ENCODE measurements at regions of chr2 and their contacts with region 1.

Region 1: GRCh38 chr2:174748948-174749347 is 15.3 kb downstream of the CHRNA1 start:
- DNase-seq: peak; percentile 83
- H3K4me3 Mint-ChIP-seq: no peak overlapping the region
- H3K27ac Mint-ChIP-seq: no peak overlapping the region
- H3K4me1 Mint-ChIP-seq: peaks cover 39% of the 10 kb centered on the region
- H3K27me3 Mint-ChIP-seq: peaks cover 41% of the 10 kb centered on the region

Region 2: GRCh38 chr2:174561283-174561971 is 187.5 kb before region 1 on chr2:
- CTCF ChIA-PET with region 1: no interaction called
- DNase-seq: no peak
- H3K4me3 Mint-ChIP-seq: no peak overlapping the region
- H3K27ac Mint-ChIP-seq: no peak overlapping the region
- H3K4me1 Mint-ChIP-seq: peaks cover 4% of the 10 kb centered on the region
- H3K27me3 Mint-ChIP-seq: no peaks in the 10 kb centered on the region

Region 3: GRCh38 chr2:174590928-174591648 is 157.9 kb before region 1 on chr2:
- CTCF ChIA-PET with region 1: no interaction called
- DNase-seq: no peak
- H3K4me3 Mint-ChIP-seq: peak overlapping the region; percentile 24
- H3K27ac Mint-ChIP-seq: peak overlapping the region; percentile 80
- H3K4me1 Mint-ChIP-seq: peaks cover 65% of the 10 kb centered on the region
- H3K27me3 Mint-ChIP-seq: no peaks in the 10 kb centered on the region

Region 4: GRCh38 chr2:174738841-174739240 is 10.1 kb before region 1 on chr2:
- CTCF ChIA-PET with region 1: interaction called, 11 read pairs
- DNase-seq: no peak
- H3K4me3 Mint-ChIP-seq: no peak overlapping the region
- H3K27ac Mint-ChIP-seq: no peak overlapping the region
- H3K4me1 Mint-ChIP-seq: no peaks in the 10 kb centered on the region
- H3K27me3 Mint-ChIP-seq: peaks cover 43% of the 10 kb centered on the region

Region 5: GRCh38 chr2:174771631-174772471 is 22.9 kb after region 1 on chr2:
- CTCF ChIA-PET with region 1: interaction called, 38 read pairs
- DNase-seq: peak; percentile 65
- H3K4me3 Mint-ChIP-seq: no peak overlapping the region
- H3K27ac Mint-ChIP-seq: no peak overlapping the region
- H3K4me1 Mint-ChIP-seq: peaks cover 25% of the 10 kb centered on the region
- H3K27me3 Mint-ChIP-seq: peaks cover 41% of the 10 kb centered on the region

Region 6: DNA sequence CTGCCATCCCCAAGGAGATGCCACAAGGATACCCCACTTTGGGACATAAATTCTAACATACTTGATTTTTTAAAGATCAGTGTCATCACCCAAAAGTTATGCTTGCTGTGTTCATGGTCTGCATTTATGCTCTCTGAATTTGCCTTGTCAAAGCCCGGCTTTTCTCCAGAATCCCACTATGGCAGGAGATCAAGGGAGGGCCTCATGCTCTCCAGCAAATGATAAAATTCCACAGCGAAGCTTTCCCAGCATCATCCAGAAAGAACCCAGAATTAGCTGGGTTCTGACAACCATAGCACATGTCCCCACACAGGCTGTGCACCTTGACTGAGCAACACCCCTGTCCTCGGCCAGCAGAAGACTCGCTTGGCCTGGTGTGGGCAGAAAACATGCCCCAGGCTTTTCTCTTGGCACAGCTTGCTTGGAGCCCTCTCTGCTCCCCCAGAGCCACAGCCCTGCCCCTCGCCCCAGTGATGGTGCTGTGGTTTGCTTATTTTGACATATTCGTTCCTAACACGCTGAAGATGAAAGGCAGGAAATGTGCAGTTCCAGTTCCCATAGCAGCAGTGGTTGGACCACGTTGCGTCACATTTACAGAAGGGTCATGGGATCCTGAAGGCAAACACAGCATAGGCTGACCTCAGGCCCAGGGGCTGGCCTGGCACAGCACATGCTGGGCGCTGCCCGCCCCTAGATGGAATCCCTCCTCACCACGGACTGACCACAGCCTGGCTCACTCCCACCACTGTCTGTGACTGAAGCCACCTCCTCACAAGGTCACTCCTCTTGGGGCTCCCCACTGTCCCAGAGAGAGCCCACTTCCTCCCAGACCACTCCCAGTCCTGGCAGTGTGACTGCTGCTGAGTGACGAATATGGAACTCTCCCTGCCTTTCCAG is 29.4 kb after region 1 on chr2:
- CTCF ChIA-PET with region 1: interaction called, 38 read pairs
- DNase-seq: peak; percentile 91
- H3K4me3 Mint-ChIP-seq: peak overlapping the region; percentile 38
- H3K27ac Mint-ChIP-seq: peak overlapping the region; percentile 86
- H3K4me1 Mint-ChIP-seq: peaks cover 52% of the 10 kb centered on the region
- H3K27me3 Mint-ChIP-seq: peaks cover 18% of the 10 kb centered on the region

Region 7: GRCh38 chr2:174985630-174986029 is 236.7 kb after region 1 on chr2:
- CTCF ChIA-PET with region 1: interaction called, 34 read pairs
- DNase-seq: no peak
- H3K4me3 Mint-ChIP-seq: no peak overlapping the region
- H3K27ac Mint-ChIP-seq: no peak overlapping the region
- H3K4me1 Mint-ChIP-seq: no peaks in the 10 kb centered on the region
- H3K27me3 Mint-ChIP-seq: peaks cover 6% of the 10 kb centered on the region

Region 8: DNA sequence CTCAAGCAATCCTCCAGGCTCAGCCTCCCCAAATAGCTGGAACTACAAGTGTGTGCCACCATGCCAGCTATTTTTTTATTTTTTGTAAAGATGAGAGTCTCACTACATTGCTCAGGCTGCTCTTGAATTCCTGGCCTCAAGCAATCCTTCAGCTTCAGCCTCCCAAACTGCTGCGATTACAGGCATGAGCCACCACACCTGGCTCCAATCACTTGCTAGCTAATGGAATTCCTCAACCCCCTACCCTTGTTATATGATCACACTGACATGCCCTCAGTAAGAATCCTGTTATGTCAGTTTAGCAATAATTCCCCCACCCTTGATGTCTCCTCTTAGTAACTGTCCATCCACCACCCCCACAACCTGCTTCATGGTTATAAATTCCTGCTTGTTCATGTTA is 243.9 kb after region 1 on chr2:
- CTCF ChIA-PET with region 1: interaction called, 34 read pairs
- DNase-seq: no peak
- H3K4me3 Mint-ChIP-seq: no peak overlapping the region
- H3K27ac Mint-ChIP-seq: no peak overlapping the region
- H3K4me1 Mint-ChIP-seq: no peaks in the 10 kb centered on the region
- H3K27me3 Mint-ChIP-seq: peaks cover 6% of the 10 kb centered on the region

Region 9: GRCh38 chr2:175025946-175026345 is 277.0 kb after region 1 on chr2:
- CTCF ChIA-PET with region 1: no interaction called
- DNase-seq: no peak
- H3K4me3 Mint-ChIP-seq: no peak overlapping the region
- H3K27ac Mint-ChIP-seq: no peak overlapping the region
- H3K4me1 Mint-ChIP-seq: no peaks in the 10 kb centered on the region
- H3K27me3 Mint-ChIP-seq: peaks cover 5% of the 10 kb centered on the region

Measured in activated naive CD4-positive, alpha-beta T cell treated with anti-CD3 and anti-CD28 coated beads, Interleukin-2, amount 10 ng/mL, durations not matched to agents 7 days and 5 days (primary cell).